BJ (cell line): ENCODE measurements at regions of chrX and their contacts with region 1.

Region 1: DNA sequence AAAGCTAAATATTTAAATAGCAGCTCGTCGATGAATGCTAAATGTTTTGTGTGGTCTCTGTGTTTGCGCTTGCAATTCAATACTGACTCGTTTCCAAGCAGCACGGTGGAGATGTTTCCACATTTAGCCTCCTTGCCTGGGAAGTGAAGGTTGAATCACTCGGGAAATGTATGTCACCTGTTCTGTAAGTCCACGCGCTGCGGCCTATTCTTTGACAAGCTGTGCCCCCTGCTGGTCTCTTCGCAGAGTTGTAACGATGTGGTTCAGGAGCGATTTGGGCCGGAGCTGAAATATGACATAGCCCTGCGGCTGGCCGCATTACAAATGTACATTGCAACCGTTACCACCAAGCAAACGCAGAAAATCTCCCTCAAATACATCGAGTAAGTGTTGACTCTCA is 89.6 kb upstream of the PRPS2 start:
- DNase-seq: peak; percentile 1
- H3K4me3 ChIP-seq: no peak overlapping the region
- H3K27me3 ChIP-seq: no peaks in the 10 kb centered on the region
- CTCF ChIP-seq: peak; percentile 58

Region 2: DNA sequence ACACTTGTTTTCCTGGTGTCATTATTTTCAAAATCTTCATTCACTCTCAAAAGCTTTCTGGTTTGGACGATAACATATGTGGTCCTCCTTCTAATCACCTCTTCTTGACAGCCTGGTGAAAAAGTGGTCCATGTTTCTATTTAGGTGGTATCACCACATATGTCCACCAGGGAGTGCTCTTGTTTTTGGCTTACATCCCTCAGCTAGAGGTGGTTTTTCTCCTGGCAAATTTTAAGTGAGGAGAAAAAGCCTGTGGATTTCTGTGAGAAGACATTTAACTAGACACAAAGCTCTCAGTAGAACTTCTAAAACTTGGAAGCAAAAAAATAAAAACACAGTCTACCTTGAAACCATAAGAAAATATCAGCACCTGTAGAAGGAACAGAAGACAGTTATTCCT is 621.4 kb before region 1 on chrX:
- CTCF ChIA-PET with region 1: interaction called, 13 read pairs
- POLR2A ChIA-PET with region 1: no interaction called
- DNase-seq: no peak
- H3K4me3 ChIP-seq: no peak overlapping the region
- H3K27me3 ChIP-seq: no peaks in the 10 kb centered on the region
- CTCF ChIP-seq: peak; percentile 51